Breast epithelium (tissue), 4 donors: ENCODE measurements at regions of chr6 and their contacts with region 1.

Region 1: DNA sequence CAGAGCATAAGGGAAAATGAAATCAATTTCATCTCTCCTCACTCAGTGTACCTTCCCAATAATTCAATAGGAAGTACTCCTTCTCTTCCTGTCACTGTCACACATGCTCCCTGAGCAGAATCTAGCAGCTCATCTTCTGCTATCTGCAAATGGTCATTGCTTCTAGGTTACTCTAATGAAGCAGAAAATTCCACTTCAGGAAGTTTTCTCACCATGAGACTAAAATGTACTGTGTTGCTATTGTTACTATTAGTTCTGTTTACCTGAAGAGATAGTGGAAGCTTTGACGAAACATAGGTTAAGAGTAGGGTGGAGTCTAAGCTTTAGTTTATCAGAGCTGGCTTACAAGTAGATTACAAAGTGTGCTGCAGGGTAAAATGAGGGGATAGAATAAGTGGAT is 52.8 kb downstream of the RFX6 start:
- DNase-seq: no peak
- H3K4me3 ChIP-seq: no peak overlapping the region
- H3K27ac ChIP-seq: no peak overlapping the region
- H3K4me1 ChIP-seq: no peaks in the 10 kb centered on the region
- H3K27me3 ChIP-seq: no peaks in the 10 kb centered on the region
- CTCF ChIP-seq: no peak
- POLR2A ChIP-seq: no peak

Region 2: GRCh38 chr6:116812051-116812650 is 117.7 kb before region 1 on chr6:
- intact Hi-C with region 1: no loop called
- DNase-seq: no peak
- H3K4me3 ChIP-seq: no peak overlapping the region
- H3K27ac ChIP-seq: no peak overlapping the region
- H3K4me1 ChIP-seq: no peaks in the 10 kb centered on the region
- H3K27me3 ChIP-seq: no peaks in the 10 kb centered on the region
- CTCF ChIP-seq: no peak
- POLR2A ChIP-seq: no peak

Region 3: DNA sequence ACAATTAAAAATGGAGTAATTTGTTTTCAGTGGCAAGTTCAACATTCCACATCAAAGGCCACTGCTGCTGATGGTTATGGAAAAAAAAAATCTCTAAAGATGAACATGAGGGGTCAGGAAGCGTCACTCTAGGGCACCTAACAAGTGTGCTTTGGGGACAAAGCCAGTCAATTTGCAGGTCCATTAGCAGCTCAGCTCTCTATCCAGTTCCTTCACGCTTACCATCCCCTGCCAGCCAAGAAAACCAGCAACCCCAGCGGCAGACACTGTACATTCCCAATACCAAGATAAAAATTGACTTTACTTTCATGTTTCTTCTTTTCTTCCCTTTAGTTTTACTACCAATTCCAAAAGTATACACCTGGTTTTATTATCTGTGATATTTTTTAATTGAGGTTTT is 42.7 kb before region 1 on chr6:
- intact Hi-C with region 1: loop called (anchors 2 kb)
- DNase-seq: no peak
- H3K4me3 ChIP-seq: no peak overlapping the region
- H3K27ac ChIP-seq: no peak overlapping the region
- H3K4me1 ChIP-seq: no peaks in the 10 kb centered on the region
- H3K27me3 ChIP-seq: no peaks in the 10 kb centered on the region
- CTCF ChIP-seq: no peak
- POLR2A ChIP-seq: no peak

Region 4: DNA sequence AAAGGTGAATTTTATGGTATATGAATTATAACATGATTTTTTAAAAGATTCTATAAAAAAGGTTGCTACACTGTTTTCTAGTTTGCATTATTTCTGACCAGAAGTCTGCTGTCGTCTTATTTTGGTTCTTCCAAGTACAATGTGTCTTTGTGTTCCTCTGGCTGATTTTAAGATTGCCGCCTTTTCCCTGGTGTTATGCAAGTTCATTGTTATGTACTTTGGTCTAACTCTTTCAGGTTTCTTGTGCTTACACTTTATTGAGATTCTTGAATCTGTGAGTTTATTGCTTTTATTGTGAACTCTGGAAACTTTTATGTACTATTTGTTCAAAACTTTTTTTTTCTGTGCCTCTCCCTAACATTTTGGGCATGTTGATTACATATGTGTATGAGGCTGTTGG is 57.0 kb after region 1 on chr6:
- intact Hi-C with region 1: no loop called
- DNase-seq: no peak
- H3K4me3 ChIP-seq: no peak overlapping the region
- H3K27ac ChIP-seq: no peak overlapping the region
- H3K4me1 ChIP-seq: no peaks in the 10 kb centered on the region
- H3K27me3 ChIP-seq: no peaks in the 10 kb centered on the region
- CTCF ChIP-seq: no peak
- POLR2A ChIP-seq: no peak